Gastrocnemius medialis (tissue), 4 donors: ENCODE measurements at regions of chr3 and their contacts with region 1.

Region 1: GRCh38 chr3:146065573-146066006 is 95.4 kb downstream of the PLOD2 start:
- DNase-seq: no peak
- ATAC-seq: no peak
- H3K4me3 ChIP-seq: no peak overlapping the region
- H3K27ac ChIP-seq: no peak overlapping the region
- H3K4me1 ChIP-seq: no peaks in the 10 kb centered on the region
- H3K27me3 ChIP-seq: no peaks in the 10 kb centered on the region
- CTCF ChIP-seq: peak; percentile 42 to 74 (median 48)
- POLR2A ChIP-seq: no peak

Region 2: DNA sequence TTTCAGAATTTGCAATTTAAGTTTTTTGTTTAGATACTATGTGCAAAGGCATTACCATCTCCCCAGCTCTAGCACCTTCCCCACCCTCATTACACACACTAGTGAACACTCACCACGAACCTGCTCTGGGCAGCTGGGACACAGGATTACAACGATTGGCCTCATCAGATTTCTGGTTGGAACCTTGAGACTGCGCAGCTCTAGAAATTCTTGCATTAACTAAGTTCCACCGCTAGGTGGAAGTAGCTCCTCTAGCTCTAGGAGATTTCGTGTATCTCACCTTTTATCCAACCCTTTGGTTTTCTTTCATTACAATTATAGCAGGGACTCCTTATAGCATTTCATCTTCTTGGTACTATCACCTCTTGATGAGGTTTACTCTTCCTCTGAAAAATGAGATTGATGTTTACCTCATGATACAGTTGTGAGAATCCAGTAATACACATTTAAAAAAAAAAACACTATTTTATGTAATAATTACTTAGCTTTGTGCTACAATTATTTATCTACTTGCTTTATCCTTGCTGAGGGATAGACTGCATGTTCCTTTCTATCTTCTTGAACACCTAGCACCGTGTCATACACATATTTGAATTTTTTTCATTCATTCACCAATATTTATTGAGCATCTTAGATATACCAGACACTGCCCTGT is 124.1 kb after region 1 on chr3:
- in situ Hi-C with region 1: no loop called
- intact Hi-C with region 1: loop called (anchors 1 kb)
- DNase-seq: no peak
- ATAC-seq: peak in 1 of 2 donors; percentile 69
- H3K4me3 ChIP-seq: no peak overlapping the region
- H3K27ac ChIP-seq: no peak overlapping the region
- H3K4me1 ChIP-seq: no peaks in the 10 kb centered on the region
- H3K27me3 ChIP-seq: no peaks in the 10 kb centered on the region
- CTCF ChIP-seq: peak; percentile 39 to 75 (median 55)
- POLR2A ChIP-seq: no peak

Region 3: DNA sequence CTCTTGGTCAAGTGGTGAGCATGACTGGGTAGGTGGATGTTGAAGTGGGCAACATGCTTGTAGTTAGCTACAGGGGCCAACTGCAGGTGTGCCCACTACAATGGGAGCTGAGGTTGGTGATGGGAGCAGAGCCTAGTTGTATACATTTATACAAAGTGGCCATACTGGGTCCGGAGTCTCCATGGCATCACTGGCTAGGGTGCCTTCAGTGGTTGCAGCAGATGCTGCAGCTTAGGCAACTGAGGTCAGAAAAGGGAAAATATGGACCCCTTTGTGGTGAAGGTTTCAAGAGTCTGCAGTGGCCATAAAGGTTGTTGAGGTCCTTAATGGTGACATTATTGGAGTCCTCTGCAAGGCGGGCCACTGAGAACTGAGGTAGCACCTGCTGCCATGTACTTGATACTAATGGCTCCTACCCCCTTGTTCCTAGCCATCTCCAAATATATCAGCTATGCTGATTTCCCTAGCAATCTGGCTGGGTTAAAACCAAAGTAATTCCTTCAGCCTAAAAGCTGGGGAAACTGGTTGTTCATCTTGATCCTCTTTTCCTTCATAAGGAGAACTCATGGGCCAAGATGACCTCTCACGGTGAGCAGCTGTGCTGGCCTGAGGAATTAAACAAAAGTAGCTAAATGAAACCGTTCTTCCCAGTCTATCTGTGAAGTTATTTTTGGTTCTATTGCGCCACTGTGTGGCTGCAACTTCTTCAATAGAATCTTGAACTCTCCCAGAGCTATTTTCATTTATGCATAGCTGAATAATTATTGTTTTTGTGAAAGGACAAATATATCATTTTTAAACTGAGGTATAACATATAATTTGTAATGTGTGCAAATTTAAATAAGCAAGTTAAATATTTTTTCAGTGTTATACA is 261.3 kb after region 1 on chr3:
- in situ Hi-C with region 1: loop called (anchors 10 to 25 kb)
- intact Hi-C with region 1: loop called (anchors 5 kb)
- DNase-seq: no peak
- ATAC-seq: peak in 1 of 2 donors; percentile 54
- H3K4me3 ChIP-seq: no peak overlapping the region
- H3K27ac ChIP-seq: no peak overlapping the region
- H3K4me1 ChIP-seq: no peaks in the 10 kb centered on the region
- H3K27me3 ChIP-seq: no peaks in the 10 kb centered on the region
- CTCF ChIP-seq: peak in 4 of 5 experiments; percentile 25 to 51 (median 35)
- POLR2A ChIP-seq: no peak

Region 4: DNA sequence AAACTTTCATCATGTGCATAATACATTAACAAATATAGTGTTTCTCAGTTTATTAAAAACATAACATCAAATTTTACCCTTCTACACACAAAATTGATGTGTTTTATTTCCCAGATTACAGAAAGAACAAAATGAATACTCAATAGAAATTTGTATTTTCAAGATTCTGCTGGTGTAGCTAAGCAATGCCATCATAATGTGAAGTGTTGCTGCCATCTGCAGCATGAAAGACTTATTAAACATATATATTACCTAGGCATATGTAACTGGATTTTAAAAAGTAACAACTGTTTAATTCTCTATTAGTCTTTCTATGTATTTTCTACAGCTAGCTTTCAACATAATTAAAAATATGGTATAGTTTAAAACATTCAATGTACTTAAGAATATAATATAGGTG is 512.1 kb after region 1 on chr3:
- in situ Hi-C with region 1: loop called in 3 of 4 experiments (anchors 25 kb)
- intact Hi-C with region 1: loop called (anchors 10 kb)
- DNase-seq: no peak
- ATAC-seq: no peak
- H3K4me3 ChIP-seq: no peak overlapping the region
- H3K27ac ChIP-seq: no peak overlapping the region
- H3K4me1 ChIP-seq: no peaks in the 10 kb centered on the region
- H3K27me3 ChIP-seq: no peaks in the 10 kb centered on the region
- CTCF ChIP-seq: peak in 2 of 5 experiments; percentile 12 to 24
- POLR2A ChIP-seq: no peak